Mammary epithelial cell (primary cell): ENCODE measurements at regions of chr9 and their contacts with region 1.

Region 1: DNA sequence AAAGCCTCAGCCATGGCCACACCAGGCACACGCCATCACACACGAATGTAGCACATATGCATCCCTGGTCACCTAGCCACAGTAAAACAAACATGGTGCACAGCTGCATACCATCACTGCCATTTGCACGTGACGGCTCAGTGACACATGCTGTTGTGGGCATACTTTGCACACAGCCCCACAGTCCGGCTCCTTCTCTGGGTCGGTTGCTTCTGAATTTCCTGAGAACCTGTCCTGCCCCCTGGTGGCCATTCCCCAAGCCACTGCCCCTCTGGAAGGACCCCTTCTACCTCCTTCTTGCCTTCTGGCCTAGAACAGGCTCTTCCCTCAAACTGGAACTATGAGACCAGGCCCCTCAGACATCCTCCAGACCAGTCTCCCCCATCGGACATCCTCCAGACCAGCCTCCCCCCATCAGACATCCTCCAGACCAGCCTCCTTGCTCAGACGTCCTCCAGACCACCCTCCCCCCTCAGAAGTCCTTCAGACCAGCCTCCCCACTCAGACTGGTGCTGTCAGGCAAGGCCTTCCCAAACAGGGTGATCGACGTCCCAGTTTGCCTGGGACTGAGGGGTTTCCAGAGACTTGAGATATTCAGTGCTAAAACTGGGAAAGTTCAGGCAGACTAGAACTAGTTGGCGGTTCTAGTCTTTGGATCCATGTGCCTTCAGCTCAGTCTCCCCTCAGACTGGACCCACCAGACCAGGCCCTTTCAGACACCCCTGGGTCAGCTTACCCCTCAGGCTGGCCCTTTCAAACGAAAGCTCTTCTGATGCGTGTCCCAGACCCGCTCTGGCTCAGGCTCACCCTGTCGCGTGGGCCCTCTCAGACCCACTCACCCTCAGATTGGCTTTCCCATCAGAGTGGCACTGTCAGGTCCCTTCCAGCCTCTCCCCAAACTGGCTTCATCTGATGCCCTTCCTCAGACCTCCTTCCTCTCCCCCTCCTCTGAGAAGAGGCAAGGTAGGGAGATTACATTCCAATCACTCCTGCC is 24.3 kb upstream of the ENHO start:
- DNase-seq: peak; percentile 59
- H3K4me3 ChIP-seq: no peak overlapping the region
- H3K27ac ChIP-seq: no peak overlapping the region
- H3K4me1 ChIP-seq: no peaks in the 10 kb centered on the region
- H3K27me3 ChIP-seq: no peaks in the 10 kb centered on the region
- CTCF ChIP-seq: peak; percentile 58 to 77

Region 2: DNA sequence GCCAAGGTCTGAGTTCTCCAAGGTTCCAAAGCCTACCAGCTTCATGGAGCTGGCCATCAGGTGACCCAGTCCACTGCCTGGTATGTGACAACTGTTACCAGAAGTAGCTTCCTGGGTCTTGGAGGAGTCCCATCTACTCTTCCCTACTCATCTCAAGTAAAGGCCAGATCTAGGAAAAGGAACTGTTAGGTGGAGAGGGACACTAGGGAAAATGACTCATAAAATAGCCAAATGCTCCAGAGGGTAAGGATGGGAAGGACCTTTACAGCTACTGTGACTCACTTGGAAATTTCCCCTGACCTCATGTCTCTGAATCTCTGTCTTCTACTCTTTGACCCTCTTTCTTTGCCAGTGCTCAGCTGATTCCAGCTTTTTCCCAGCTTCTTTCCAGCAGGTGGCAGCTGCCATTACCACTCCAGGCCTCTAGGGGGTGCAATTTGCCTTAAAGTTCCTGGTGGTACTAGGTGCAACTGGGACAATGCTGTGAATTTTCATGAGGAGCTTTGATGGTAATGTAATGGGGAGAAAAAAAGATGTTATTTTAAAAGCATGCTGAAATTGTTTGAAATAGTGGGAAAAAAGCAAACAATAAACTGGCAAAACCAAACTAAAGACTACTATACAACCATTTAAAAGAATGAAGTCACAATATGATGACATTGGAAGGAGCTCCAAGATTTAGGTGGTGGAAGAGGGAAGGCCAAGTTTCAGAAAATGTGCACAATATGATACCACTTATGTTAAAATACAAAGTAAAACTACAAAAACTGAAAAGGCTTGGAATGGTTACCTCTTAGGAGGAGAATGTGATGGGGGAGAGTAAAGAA is 143.4 kb before region 1 on chr9:
- CTCF ChIA-PET with region 1: no interaction called
- dilution Hi-C with region 1: no loop called
- in situ Hi-C with region 1: no loop called
- intact Hi-C with region 1: loop called (anchors 1 kb)
- DNase-seq: peak; percentile 45
- H3K4me3 ChIP-seq: no peak overlapping the region
- H3K27ac ChIP-seq: no peak overlapping the region
- H3K4me1 ChIP-seq: no peaks in the 10 kb centered on the region
- H3K27me3 ChIP-seq: no peaks in the 10 kb centered on the region
- CTCF ChIP-seq: peak; percentile 97 to 99

Region 3: GRCh38 chr9:34519321-34520020 is 27.7 kb before region 1 on chr9:
- CTCF ChIA-PET with region 1: no interaction called
- dilution Hi-C with region 1: no loop called
- in situ Hi-C with region 1: no loop called
- intact Hi-C with region 1: loop called (anchors 1 kb)
- DNase-seq: no peak
- H3K4me3 ChIP-seq: no peak overlapping the region
- H3K27ac ChIP-seq: no peak overlapping the region
- H3K4me1 ChIP-seq: peaks cover 9% of the 10 kb centered on the region
- H3K27me3 ChIP-seq: no peaks in the 10 kb centered on the region
- CTCF ChIP-seq: peak; percentile 9 to 42

Region 4: GRCh38 chr9:34603610-34604231 is 56.6 kb after region 1 on chr9:
- CTCF ChIA-PET with region 1: interaction called, 3 read pairs
- dilution Hi-C with region 1: no loop called
- in situ Hi-C with region 1: loop called (anchors 5 to 10 kb)
- intact Hi-C with region 1: loop called (anchors 1 kb)
- DNase-seq: peak; percentile 54
- H3K4me3 ChIP-seq: no peak overlapping the region
- H3K27ac ChIP-seq: no peak overlapping the region
- H3K4me1 ChIP-seq: peaks cover 15% of the 10 kb centered on the region
- H3K27me3 ChIP-seq: no peaks in the 10 kb centered on the region
- CTCF ChIP-seq: peak; percentile 92 to 96

Region 5: DNA sequence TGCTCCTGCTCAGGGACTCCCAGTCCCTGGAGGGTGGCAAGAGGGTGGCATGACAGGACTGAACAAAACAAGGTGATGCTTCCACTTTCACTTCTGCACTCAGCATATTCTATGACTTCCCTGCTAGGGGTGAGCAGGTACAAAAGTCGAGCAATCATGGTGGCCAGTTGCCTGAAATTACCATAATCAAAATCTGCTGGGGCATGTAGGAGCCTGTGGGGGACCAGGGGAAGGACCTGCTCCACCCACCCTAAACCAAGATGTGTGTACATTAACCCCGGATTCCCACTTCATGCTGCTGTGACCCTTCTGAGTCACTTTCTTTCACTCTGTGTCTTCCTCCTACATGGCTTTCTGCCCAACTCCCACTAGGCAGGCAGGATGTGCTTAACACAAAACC is 337.6 kb after region 1 on chr9:
- CTCF ChIA-PET with region 1: no interaction called
- dilution Hi-C with region 1: no loop called
- in situ Hi-C with region 1: no loop called
- intact Hi-C with region 1: no loop called
- DNase-seq: peak; percentile 54
- H3K4me3 ChIP-seq: no peak overlapping the region
- H3K27ac ChIP-seq: no peak overlapping the region
- H3K4me1 ChIP-seq: peaks cover 10% of the 10 kb centered on the region
- H3K27me3 ChIP-seq: no peaks in the 10 kb centered on the region
- CTCF ChIP-seq: no peak